ENCODE measurements at regions of chr12 and their contacts with region 1.

Region 1: DNA sequence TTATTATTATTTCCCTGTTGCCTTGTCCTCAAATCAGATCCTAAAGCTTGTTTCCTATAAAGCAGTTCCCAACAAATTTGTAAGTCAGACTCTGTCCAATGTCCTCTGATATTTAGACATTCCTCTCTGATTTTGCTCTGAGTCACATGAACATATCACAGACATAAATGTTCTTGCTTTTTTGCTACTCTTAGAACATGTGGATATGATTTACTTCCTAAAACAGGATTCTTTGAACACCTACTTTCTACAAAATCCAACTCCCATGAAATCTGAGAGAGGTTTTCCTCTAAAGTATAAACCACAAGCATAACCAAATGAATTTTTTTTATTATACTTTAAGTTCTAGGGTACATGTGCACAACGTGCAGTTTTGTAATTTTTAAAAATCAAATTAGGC is 181.3 kb upstream of the SLC38A2 start:
- H3K4me3 ChIP-seq: no peak overlapping the region
- H3K27ac ChIP-seq: no peak overlapping the region
- H3K4me1 ChIP-seq: peaks cover 9% of the 10 kb centered on the region
- CTCF ChIP-seq: no peak

Region 2: DNA sequence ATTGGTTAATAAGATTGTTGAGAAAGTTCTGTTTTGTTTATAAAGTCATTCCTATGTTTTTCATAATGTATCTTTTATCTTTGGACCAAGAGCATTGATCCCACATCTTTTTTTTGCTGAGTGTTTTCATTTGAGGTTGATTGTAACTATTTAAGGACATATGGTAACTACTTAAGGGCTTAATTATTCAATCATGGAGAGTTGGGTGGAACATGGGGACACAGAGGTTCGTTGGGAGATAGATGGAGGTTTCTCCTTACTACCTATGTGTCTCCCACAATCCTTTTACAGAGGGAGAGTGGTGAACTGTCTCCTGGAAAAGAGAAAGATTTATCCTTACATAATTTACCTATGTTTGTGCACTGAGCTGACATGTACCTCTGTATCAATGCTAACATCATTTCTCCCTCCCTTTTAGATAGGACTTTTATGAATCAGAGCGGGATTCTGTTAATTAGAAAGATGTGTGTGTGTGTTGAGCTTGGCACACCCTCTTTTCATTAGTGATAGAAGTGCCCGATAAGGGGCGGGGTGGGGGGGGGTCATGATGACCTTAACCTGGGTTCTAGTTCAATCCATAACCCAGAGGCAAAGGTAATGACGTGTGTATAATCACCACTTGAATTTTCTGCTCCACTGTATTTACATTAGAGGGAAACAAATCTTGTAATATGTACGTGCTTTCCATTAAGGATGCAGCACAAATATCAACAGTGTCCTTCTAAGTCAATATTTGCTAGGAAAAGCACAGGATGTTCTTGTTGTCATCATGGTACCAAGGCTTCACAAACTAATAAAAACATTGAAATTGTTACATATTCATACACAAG is 60.3 kb before region 1 on chr12:
- CTCF ChIA-PET with region 1: no interaction called
- POLR2A ChIA-PET with region 1: interaction called, 10 read pairs
- H3K4me3 ChIP-seq: no peak overlapping the region
- H3K27ac ChIP-seq: no peak overlapping the region
- H3K4me1 ChIP-seq: peaks cover 12% of the 10 kb centered on the region
- CTCF ChIP-seq: no peak